CD4-positive, alpha-beta memory T cell (primary cell): ENCODE measurements at regions of chr2 and their contacts with region 1.

Region 1: DNA sequence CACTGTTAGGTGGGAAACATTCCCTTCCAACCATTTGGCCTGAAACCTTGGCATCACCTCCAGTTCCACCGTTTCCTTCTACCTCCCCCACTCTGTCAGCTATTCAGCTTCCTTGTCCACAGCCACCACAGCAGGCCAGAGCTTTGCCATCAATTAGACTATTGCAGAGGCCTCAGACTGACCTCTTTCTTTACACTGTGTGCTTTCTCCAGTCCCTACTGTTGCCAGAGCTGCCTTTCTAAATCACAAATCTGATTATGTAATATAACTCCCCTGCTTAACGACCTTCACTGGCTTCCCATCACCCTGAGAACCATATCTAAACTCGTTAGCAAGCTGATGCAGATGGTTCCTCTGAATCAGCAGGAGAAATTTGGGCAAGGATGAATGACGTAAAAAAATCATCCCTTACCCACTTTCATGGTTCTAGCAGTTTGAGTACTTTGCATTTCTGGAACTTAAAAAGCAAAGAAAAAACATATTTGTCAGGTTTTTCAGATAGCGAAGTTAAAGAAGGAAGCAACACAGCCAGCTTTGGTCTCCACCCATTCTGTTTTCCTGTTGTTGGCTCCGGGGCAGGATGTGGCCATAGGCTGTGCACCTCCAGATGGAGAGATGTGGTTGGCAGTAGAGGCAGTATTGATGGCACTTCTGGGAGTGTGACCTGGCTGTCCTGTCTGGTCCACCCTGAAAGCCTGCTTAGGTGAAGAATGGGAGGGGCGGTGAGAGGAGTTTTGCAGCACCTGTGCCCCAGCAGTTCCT is 422.1 kb downstream of the PARD3B start:
- DNase-seq: peak; percentile 64 to 78 (median 73)
- H3K4me3 ChIP-seq: peak overlapping the region in 1 of 2 donors; percentile 6
- H3K4me3 Mint-ChIP-seq: peak overlapping the region; percentile 12 to 86 (median 72)
- H3K27ac ChIP-seq: peak overlapping the region; percentile 48
- H3K27ac Mint-ChIP-seq: peak overlapping the region; percentile 83 to 100 (median 95)
- H3K4me1 ChIP-seq: peaks cover 72% of the 10 kb centered on the region
- H3K4me1 Mint-ChIP-seq: peaks cover 41 to 67% (median 57%) of the 10 kb centered on the region in 4 donors
- H3K27me3 ChIP-seq: no peaks in the 10 kb centered on the region
- H3K27me3 Mint-ChIP-seq: no peaks in the 10 kb centered on the region

Region 2: GRCh38 chr2:204407204-204408070 is 559.9 kb before region 1 on chr2:
- CTCF ChIA-PET with region 1: no interaction called
- POLR2A ChIA-PET with region 1: no interaction called
- intact Hi-C with region 1: no loop called
- DNase-seq: no peak
- H3K4me3 ChIP-seq: no peak overlapping the region
- H3K4me3 Mint-ChIP-seq: no peak overlapping the region
- H3K27ac ChIP-seq: no peak overlapping the region
- H3K27ac Mint-ChIP-seq: no peak overlapping the region
- H3K4me1 ChIP-seq: no peaks in the 10 kb centered on the region
- H3K4me1 Mint-ChIP-seq: no peaks in the 10 kb centered on the region
- H3K27me3 ChIP-seq: no peaks in the 10 kb centered on the region
- H3K27me3 Mint-ChIP-seq: peaks cover 7 to 8% of the 10 kb centered on the region in 2 donors

Region 3: DNA sequence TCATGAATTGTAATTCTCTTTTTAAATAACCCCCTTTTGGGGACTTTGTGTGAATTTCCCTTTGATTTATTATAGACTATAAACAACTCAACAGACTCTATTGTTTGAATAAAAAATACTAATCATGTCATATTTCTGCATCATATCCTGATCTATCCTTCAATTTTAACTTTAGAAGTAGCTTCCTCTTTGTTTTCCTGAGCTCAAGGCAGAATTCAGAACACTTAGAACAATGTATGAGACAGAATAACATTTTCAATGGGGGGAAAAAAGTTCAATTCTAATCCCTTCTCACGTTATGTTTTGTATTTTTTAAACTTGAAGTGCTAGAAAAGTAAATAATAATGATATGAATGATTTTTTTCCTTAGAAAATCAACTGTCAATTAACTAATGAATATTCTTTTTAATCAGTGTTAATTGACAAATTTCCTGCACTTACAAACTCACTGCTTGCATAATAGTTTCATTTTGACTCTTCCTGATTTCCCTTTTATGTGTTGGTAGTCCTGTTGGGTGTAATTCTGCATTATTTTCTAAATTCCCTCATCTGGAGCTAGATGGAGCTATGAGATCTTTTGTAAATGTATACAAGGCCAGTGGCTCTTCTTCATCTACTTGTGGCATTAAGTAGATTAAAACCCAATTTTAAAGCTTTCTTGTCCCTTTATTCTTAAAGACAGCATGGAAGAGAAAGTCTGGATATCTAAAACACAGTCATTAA is 96.0 kb before region 1 on chr2:
- CTCF ChIA-PET with region 1: interaction called, 7 read pairs
- POLR2A ChIA-PET with region 1: interaction called, 32 read pairs
- intact Hi-C with region 1: no loop called
- DNase-seq: peak in 4 of 5 donors; percentile 37 to 53 (median 44)
- H3K4me3 ChIP-seq: no peak overlapping the region
- H3K4me3 Mint-ChIP-seq: peak overlapping the region in 5 of 8 donors; percentile 0 to 70 (median 1)
- H3K27ac ChIP-seq: no peak overlapping the region
- H3K27ac Mint-ChIP-seq: peak overlapping the region in 2 of 7 donors; percentile 5 to 29
- H3K4me1 ChIP-seq: peaks cover 15% of the 10 kb centered on the region
- H3K4me1 Mint-ChIP-seq: peaks cover 11 to 30% (median 22%) of the 10 kb centered on the region in 4 donors
- H3K27me3 ChIP-seq: no peaks in the 10 kb centered on the region
- H3K27me3 Mint-ChIP-seq: no peaks in the 10 kb centered on the region

Region 4: GRCh38 chr2:204931562-204931961 is 35.8 kb before region 1 on chr2:
- CTCF ChIA-PET with region 1: no interaction called
- POLR2A ChIA-PET with region 1: interaction called, 3 read pairs
- intact Hi-C with region 1: loop called (anchors 5 kb)
- DNase-seq: no peak
- H3K4me3 ChIP-seq: no peak overlapping the region
- H3K4me3 Mint-ChIP-seq: no peak overlapping the region
- H3K27ac ChIP-seq: no peak overlapping the region
- H3K27ac Mint-ChIP-seq: no peak overlapping the region
- H3K4me1 ChIP-seq: no peaks in the 10 kb centered on the region
- H3K4me1 Mint-ChIP-seq: peaks cover 0 to 11% (median 5%) of the 10 kb centered on the region in 4 donors
- H3K27me3 ChIP-seq: no peaks in the 10 kb centered on the region
- H3K27me3 Mint-ChIP-seq: peaks cover 0 to 1% of the 10 kb centered on the region in 2 donors

Region 5: DNA sequence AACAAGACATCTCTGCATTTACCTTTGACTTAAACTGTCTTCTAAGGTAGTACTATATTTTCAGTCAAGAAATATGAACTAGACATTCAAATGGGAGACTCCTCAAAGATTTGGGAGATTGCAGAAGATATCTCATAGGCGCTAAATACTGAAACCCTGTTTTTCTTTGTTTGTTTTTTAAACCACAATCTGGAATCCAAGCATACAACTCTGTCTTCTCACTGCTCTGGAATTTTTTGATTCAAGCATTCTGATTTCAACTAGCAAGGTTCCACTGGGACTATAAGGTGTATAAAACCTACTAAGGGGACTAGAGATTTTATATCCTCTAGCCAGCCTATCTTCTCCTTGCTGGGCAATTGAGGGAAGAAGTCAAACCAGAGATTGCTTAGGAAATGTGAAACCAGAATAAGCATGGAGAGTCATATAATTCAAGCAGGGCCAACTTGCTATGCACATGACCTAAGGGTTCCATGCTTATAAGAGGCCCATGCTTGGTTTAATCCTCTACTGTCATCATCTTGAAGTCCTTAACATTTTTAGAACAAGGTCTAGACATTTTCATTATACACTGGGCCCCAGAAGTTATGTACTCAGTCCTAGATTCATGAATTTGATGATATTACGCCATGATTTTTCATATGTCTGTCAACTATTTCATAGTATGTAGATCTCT is 16.6 kb before region 1 on chr2:
- CTCF ChIA-PET with region 1: interaction called, 8 read pairs
- POLR2A ChIA-PET with region 1: interaction called, 21 read pairs
- intact Hi-C with region 1: loop called (anchors 2 kb)
- DNase-seq: no peak
- H3K4me3 ChIP-seq: no peak overlapping the region
- H3K4me3 Mint-ChIP-seq: no peak overlapping the region
- H3K27ac ChIP-seq: no peak overlapping the region
- H3K27ac Mint-ChIP-seq: no peak overlapping the region
- H3K4me1 ChIP-seq: peaks cover 27% of the 10 kb centered on the region
- H3K4me1 Mint-ChIP-seq: peaks cover 25 to 42% (median 38%) of the 10 kb centered on the region in 4 donors
- H3K27me3 ChIP-seq: no peaks in the 10 kb centered on the region
- H3K27me3 Mint-ChIP-seq: no peaks in the 10 kb centered on the region

Region 6: GRCh38 chr2:205002390-205002789 is 35.0 kb after region 1 on chr2:
- CTCF ChIA-PET with region 1: no interaction called
- POLR2A ChIA-PET with region 1: interaction called, 11 read pairs
- intact Hi-C with region 1: no loop called
- DNase-seq: peak in 4 of 5 donors; percentile 21 to 46 (median 32)
- H3K4me3 ChIP-seq: no peak overlapping the region
- H3K4me3 Mint-ChIP-seq: peak overlapping the region in 6 of 8 donors; percentile 12 to 68 (median 44)
- H3K27ac ChIP-seq: no peak overlapping the region
- H3K27ac Mint-ChIP-seq: peak overlapping the region in 2 of 7 donors; percentile 1 to 53
- H3K4me1 ChIP-seq: peaks cover 13% of the 10 kb centered on the region
- H3K4me1 Mint-ChIP-seq: peaks cover 12 to 23% (median 17%) of the 10 kb centered on the region in 4 donors
- H3K27me3 ChIP-seq: no peaks in the 10 kb centered on the region
- H3K27me3 Mint-ChIP-seq: peaks cover 0 to 1% of the 10 kb centered on the region in 2 donors